ENCODE measurements at regions of chr2 and their contacts with region 1.

Region 1: DNA sequence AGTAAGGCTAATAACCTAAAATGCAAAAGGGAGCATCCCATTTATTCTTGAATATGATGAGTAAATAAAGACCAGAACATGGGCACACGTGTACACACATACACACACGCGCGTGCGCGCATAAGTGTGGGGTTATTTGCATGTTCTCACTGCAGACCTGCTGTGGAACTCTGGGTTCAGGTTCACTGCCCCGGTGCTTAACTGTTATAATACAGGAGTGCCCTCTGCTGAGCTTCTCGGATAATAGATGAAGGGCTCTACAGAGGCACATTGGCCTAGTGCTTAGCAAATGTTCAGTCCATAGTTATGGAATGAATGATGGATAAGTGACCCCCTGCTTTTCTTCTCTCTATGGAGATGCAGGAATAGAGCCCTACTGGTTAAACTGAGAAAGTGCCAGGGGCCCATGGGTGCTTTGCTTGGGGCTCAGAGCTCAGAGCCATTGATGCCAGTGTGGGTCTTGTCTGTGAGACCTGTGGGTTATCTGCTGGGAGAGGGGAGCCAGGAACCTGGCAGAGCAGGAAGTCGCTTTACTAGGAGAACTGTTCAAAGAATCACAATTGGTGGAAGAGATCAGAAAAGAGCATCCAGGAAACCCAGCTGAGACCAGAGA is 3.6 kb upstream of the ARL4C start:
- DNase-seq: peak; percentile 67
- H3K4me3 Mint-ChIP-seq: no peak overlapping the region
- H3K27ac Mint-ChIP-seq: no peak overlapping the region
- H3K4me1 Mint-ChIP-seq: peaks cover 15% of the 10 kb centered on the region
- H3K27me3 Mint-ChIP-seq: no peaks in the 10 kb centered on the region
- CTCF ChIP-seq: peak; percentile 63

Region 2: DNA sequence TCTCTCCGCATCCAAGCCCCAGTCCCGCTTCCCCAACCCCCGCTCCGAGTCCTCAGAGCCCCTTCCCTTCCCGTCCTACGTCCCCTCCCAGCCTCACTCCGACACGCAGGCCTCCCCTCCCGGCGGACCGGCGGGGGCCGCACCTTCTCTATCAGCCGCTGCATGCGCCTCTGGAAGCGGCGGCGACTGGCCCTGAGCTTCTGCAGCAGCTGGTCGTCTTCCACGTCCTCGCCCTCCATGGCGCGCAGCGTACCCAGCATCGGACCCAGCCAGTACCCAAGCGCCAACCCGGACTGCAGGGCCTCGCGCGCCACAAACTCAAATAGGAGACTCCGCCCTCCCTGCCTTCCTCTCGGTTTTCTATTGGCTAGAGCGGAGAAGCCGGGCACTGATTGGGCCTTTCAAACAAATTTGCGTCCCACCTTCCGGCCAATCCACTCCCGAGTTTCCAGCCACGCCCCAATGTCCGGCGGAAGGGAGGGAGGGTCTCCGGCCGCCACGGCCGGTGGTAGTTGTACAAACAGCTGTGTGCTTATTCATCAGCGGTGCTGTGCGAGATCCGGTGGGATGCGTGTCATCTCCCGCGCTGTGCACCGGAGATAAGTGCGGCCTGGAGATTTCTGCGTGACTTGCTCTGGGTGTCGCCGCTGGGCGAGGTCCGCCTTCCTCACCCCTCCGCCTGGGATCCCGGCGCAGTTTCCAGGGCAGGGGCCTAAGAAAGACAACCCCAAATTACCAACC is 646.1 kb before region 1 on chr2 and contains the start of gene HJURP:
- CTCF ChIA-PET with region 1: interaction called, 3 read pairs
- POLR2A ChIA-PET with region 1: no interaction called
- intact Hi-C with region 1: loop called (anchors 10 kb)
- DNase-seq: peak; percentile 97
- H3K4me3 Mint-ChIP-seq: peak within 1 kb of the TSS; percentile 90
- H3K27ac Mint-ChIP-seq: peak within 1 kb of the TSS; percentile 87
- H3K4me1 Mint-ChIP-seq: peaks cover 16% of the 10 kb centered on the region
- H3K27me3 Mint-ChIP-seq: no peaks in the 10 kb centered on the region
- CTCF ChIP-seq: no peak
- total RNA-seq, gene HJURP: 12.7 and 29.3 TPM in 2 replicates

Region 3: DNA sequence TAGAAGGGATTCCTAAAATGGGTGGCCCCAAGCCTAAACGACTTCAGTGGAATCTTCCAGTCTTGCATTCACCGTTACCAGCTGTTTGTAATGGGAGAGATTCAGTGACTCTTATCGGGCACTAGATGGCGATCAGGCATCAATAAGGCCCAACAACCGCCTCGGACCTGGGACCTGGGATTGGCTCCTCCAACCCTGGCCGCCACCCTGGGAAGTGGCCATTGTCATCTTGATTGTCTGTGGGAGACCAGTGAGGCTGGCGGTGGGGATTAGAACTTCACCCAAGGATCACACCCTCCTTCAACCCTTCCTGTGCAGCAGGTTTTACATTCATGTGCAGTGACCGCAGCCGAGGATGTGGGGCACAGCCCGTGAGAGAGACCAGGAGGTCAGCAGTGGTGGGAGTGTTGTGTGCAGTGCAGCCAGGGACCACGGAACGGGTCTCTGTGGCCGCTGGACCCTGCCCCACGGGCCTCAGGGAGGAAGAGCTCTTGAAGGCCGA is 364.7 kb before region 1 on chr2:
- CTCF ChIA-PET with region 1: interaction called, 40 read pairs
- POLR2A ChIA-PET with region 1: interaction called, 26 read pairs
- intact Hi-C with region 1: loop called (anchors 1 kb)
- DNase-seq: peak; percentile 84
- H3K4me3 Mint-ChIP-seq: no peak overlapping the region
- H3K27ac Mint-ChIP-seq: no peak overlapping the region
- H3K4me1 Mint-ChIP-seq: peaks cover 36% of the 10 kb centered on the region
- H3K27me3 Mint-ChIP-seq: no peaks in the 10 kb centered on the region
- CTCF ChIP-seq: peak; percentile 92

Region 4: GRCh38 chr2:234257856-234258561 is 242.5 kb before region 1 on chr2:
- CTCF ChIA-PET with region 1: interaction called, 16 read pairs
- POLR2A ChIA-PET with region 1: interaction called, 17 read pairs
- intact Hi-C with region 1: loop called (anchors 1 kb)
- DNase-seq: peak; percentile 97
- H3K4me3 Mint-ChIP-seq: no peak overlapping the region
- H3K27ac Mint-ChIP-seq: peak overlapping the region; percentile 50
- H3K4me1 Mint-ChIP-seq: peaks cover 29% of the 10 kb centered on the region
- H3K27me3 Mint-ChIP-seq: no peaks in the 10 kb centered on the region
- CTCF ChIP-seq: peak; percentile 68

Region 5: GRCh38 chr2:234308813-234309195 is 191.7 kb before region 1 on chr2:
- CTCF ChIA-PET with region 1: no interaction called
- POLR2A ChIA-PET with region 1: interaction called, 6 read pairs
- intact Hi-C with region 1: loop called (anchors 5 kb)
- DNase-seq: no peak
- H3K4me3 Mint-ChIP-seq: no peak overlapping the region
- H3K27ac Mint-ChIP-seq: no peak overlapping the region
- H3K4me1 Mint-ChIP-seq: peaks cover 24% of the 10 kb centered on the region
- H3K27me3 Mint-ChIP-seq: no peaks in the 10 kb centered on the region
- CTCF ChIP-seq: no peak

Region 6: GRCh38 chr2:234422273-234422767 is 78.2 kb before region 1 on chr2:
- CTCF ChIA-PET with region 1: interaction called, 3 read pairs
- POLR2A ChIA-PET with region 1: interaction called, 19 read pairs
- intact Hi-C with region 1: no loop called
- DNase-seq: peak; percentile 83
- H3K4me3 Mint-ChIP-seq: no peak overlapping the region
- H3K27ac Mint-ChIP-seq: peak overlapping the region; percentile 87
- H3K4me1 Mint-ChIP-seq: peaks cover 26% of the 10 kb centered on the region
- H3K27me3 Mint-ChIP-seq: no peaks in the 10 kb centered on the region
- CTCF ChIP-seq: no peak

Region 7: DNA sequence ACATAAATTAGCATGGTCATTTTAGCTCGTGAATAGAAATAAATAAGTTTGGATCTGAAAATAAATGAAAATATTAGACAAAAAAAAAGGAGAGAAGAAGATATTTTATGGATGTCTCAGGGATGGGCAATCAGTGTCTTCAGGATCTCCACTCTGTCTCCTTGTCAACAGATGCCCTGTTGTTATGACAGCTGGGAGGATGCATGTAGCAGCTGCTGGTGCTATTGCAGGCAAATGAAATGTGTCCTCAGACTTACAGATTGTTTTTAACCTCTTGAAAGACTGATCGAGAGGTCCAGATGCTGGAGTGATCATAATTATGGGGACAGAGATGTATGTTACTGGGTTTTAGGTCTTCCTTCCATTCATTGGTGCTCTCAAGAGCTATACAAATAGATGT is 21.0 kb after region 1 on chr2:
- CTCF ChIA-PET with region 1: no interaction called
- POLR2A ChIA-PET with region 1: no interaction called
- intact Hi-C with region 1: no loop called
- DNase-seq: no peak
- H3K4me3 Mint-ChIP-seq: no peak overlapping the region
- H3K27ac Mint-ChIP-seq: no peak overlapping the region
- H3K4me1 Mint-ChIP-seq: no peaks in the 10 kb centered on the region
- H3K27me3 Mint-ChIP-seq: no peaks in the 10 kb centered on the region
- CTCF ChIP-seq: no peak

Region 8: DNA sequence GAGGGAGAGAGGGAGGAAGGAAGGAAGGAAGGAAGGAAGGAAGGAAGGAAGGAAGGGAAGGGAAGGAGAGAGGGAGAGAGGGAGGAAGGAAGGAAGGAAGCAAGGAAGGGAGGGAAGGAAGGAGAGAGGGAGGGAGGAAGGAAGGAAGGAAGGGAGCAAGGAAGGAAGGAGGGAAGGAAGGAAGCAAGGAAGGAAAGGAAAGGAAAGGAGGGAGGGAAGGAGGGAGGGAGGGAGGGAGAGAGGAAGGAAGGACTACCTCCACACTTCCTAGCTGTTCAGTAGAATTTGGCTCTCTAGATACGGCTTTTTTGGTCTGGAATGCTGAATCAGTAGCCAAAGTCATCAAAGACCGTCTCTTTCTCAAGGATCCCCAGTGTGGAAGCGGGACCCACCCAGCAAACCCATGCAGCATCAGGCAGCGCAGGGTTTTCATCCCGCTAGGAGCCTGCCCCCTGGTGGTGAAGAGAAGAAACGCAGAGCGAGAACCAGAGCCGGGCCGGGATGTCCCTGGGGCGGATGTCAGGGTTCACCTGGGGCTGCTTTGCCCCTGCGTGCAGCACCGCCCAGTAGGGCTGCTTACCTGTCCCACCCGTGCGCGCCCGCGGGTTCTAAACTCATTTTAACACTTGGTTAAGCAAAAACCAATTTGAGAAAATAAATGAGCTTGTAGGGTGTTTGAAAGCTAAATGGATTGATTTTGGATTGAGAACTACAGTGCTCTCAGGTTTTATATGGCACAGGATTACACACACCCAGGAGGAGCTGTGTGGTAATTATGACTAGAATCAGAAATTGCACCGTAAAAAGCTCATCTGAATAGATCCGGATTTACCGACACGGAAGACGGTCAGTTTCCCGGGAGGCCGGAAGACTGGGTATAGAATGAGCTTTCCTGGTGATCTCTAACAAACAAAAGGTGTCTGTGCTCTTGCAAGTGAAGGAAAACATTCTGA is 44.4 kb after region 1 on chr2:
- CTCF ChIA-PET with region 1: interaction called, 7 read pairs
- POLR2A ChIA-PET with region 1: no interaction called
- intact Hi-C with region 1: loop called (anchors 2 kb)
- DNase-seq: peak; percentile 68
- H3K4me3 Mint-ChIP-seq: no peak overlapping the region
- H3K27ac Mint-ChIP-seq: no peak overlapping the region
- H3K4me1 Mint-ChIP-seq: no peaks in the 10 kb centered on the region
- H3K27me3 Mint-ChIP-seq: no peaks in the 10 kb centered on the region
- CTCF ChIP-seq: peak; percentile 87

Measured in MCF 10A (cell line).